Activated CD4-positive, alpha-beta T cell treated with anti-CD3 and anti-CD28 coated beads for 36 hours (primary cell): ENCODE measurements at regions of chr4 and their contacts with region 1.

Region 1: DNA sequence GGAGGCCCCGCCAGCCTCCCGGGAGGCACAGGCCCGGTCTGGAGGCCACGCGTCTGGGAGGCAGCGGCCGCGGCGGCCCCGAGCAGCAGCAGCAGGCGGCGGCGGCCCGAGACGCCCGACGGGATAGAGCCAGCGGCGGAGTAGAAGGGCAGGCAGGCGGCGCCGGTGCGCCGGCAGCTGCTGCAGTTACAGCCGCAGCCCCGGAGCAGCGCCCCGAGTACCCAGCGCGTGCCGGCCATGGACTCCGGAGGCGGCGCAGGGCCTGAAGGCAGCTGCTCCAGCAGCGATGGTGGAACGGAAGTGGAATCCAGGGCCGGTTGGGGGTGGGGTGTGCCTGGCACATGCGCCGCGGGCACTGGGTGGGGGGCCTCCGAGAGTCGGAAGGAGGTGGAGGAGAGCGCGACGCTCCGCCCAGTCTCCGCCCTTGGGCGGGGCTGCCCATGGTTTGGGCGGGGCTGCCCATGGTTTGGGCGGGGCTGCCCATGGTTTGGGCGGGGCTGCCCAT is at the start of gene GRSF1:
- DNase-seq: peak; percentile 98
- ATAC-seq: peak; percentile 87
- H3K4me3 Mint-ChIP-seq: peak within 1 kb of the TSS; percentile 94
- H3K27ac Mint-ChIP-seq: peak within 1 kb of the TSS; percentile 95
- H3K4me1 Mint-ChIP-seq: peaks cover 53% of the 10 kb centered on the region
- H3K27me3 Mint-ChIP-seq: no peaks in the 10 kb centered on the region
- total RNA-seq, gene GRSF1: 96.8 to 115 TPM

Region 2: DNA sequence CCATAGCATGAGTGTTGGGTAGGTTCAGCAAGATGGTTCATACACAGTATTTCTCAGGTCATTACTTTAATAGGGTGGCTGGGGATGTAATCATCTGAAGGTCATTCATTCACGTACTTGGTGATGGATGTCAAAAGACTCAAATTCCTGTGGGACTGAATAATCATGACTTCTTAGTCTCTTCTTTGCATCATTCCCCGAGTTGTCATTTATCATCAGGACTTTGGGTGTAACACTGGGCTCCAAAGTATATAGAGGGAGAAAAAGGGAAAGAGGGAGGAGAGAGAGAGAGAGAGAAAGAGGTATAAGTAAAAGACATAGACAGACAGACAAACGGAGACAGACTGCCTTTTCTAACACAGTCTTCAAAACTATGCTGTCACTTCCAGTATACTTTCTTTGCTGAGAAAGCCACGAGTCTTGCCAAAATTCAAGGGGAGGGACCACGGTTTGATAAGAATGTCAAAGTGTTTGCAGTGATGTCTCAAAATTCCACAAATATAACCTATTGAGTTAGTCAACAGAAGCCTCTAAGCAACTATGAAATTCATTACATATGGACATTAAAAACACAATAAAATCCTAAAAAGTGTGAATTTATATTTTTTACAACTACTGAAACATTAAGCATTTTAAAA is 1944.0 kb before region 1 on chr4:
- CTCF ChIA-PET with region 1: no interaction called
- POLR2A ChIA-PET with region 1: no interaction called
- intact Hi-C with region 1: no loop called
- DNase-seq: no peak
- ATAC-seq: no peak
- H3K4me3 Mint-ChIP-seq: no peak overlapping the region
- H3K27ac Mint-ChIP-seq: no peak overlapping the region
- H3K4me1 Mint-ChIP-seq: no peaks in the 10 kb centered on the region
- H3K27me3 Mint-ChIP-seq: no peaks in the 10 kb centered on the region

Region 3: DNA sequence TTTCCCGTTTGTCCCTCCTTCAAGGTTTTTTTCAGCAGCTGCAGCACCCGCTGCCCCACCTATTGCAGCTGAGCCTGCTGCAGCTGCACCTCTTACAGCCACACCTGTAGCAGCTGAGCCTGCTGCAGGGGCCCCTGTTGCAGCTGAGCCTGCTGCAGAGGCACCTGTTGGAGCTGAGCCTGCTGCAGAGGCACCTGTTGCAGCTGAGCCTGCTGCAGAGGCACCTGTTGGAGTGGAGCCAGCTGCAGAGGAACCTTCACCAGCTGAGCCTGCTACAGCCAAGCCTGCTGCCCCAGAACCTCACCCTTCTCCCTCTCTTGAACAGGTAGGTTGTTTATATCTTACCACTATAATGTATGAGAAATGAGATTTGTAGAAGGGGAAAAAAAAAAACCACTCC is 681.1 kb before region 1 on chr4:
- CTCF ChIA-PET with region 1: no interaction called
- POLR2A ChIA-PET with region 1: no interaction called
- intact Hi-C with region 1: no loop called
- DNase-seq: no peak
- ATAC-seq: no peak
- H3K4me3 Mint-ChIP-seq: no peak overlapping the region
- H3K27ac Mint-ChIP-seq: no peak overlapping the region
- H3K4me1 Mint-ChIP-seq: no peaks in the 10 kb centered on the region
- H3K27me3 Mint-ChIP-seq: no peaks in the 10 kb centered on the region

Region 4: GRCh38 chr4:70734168-70734954 is 105.3 kb before region 1 on chr4:
- CTCF ChIA-PET with region 1: interaction called, 3 read pairs
- POLR2A ChIA-PET with region 1: interaction called, 3 read pairs
- intact Hi-C with region 1: loop called in 1 of 2 experiments (anchors 2 kb)
- DNase-seq: peak; percentile 39
- ATAC-seq: peak; percentile 92
- H3K4me3 Mint-ChIP-seq: peak overlapping the region; percentile 52
- H3K27ac Mint-ChIP-seq: peak overlapping the region; percentile 74
- H3K4me1 Mint-ChIP-seq: peaks cover 36% of the 10 kb centered on the region
- H3K27me3 Mint-ChIP-seq: no peaks in the 10 kb centered on the region

Region 5: DNA sequence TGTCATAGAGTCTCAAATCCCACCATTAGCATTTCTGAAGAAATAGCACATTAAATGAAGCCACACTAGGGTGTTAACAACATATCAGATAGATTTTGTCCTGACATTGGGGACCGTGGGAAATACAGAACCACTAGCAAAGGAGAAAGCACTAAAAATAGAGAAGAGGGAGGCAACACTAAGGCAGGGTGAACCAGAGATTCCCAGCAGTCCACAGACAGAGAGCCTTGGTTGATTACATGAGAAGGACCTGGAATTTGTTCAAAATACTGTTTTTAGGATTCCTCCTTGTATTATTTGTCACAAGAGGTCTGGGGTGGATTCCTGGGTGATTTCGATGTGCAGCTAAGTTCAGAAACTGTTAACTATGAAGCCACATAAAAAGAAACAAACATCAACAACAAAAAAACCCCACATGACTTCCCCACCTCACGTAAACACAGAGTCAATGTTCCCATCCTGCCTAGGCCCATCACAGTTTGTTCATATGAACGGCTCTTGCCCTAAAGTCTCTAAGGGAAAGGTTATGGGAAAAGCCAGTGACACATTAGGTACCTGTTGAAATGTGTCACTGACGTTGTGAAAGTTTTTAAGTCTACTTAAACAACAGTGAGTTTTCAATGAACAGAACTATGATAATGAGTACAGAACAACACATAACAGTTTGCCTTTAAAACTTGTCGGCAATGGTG is 23.6 kb after region 1 on chr4:
- CTCF ChIA-PET with region 1: no interaction called
- POLR2A ChIA-PET with region 1: no interaction called
- intact Hi-C with region 1: loop called in 1 of 2 experiments (anchors 1 kb)
- DNase-seq: peak; percentile 40
- ATAC-seq: peak; percentile 97
- H3K4me3 Mint-ChIP-seq: no peak overlapping the region
- H3K27ac Mint-ChIP-seq: peak overlapping the region; percentile 34
- H3K4me1 Mint-ChIP-seq: peaks cover 13% of the 10 kb centered on the region
- H3K27me3 Mint-ChIP-seq: no peaks in the 10 kb centered on the region

Region 6: GRCh38 chr4:70901984-70902576 is 62.4 kb after region 1 on chr4 and contains the start of gene MOB1B:
- CTCF ChIA-PET with region 1: interaction called, 3 read pairs
- POLR2A ChIA-PET with region 1: interaction called, 3 read pairs
- intact Hi-C with region 1: loop called (anchors 1 to 2 kb)
- DNase-seq: peak; percentile 94
- ATAC-seq: peak; percentile 96
- H3K4me3 Mint-ChIP-seq: peak within 1 kb of the TSS; percentile 96
- H3K27ac Mint-ChIP-seq: peak within 1 kb of the TSS; percentile 89
- H3K4me1 Mint-ChIP-seq: peaks cover 27% of the 10 kb centered on the region
- H3K27me3 Mint-ChIP-seq: no peaks in the 10 kb centered on the region
- total RNA-seq, gene MOB1B: 18.5 to 21.9 TPM

Region 7: DNA sequence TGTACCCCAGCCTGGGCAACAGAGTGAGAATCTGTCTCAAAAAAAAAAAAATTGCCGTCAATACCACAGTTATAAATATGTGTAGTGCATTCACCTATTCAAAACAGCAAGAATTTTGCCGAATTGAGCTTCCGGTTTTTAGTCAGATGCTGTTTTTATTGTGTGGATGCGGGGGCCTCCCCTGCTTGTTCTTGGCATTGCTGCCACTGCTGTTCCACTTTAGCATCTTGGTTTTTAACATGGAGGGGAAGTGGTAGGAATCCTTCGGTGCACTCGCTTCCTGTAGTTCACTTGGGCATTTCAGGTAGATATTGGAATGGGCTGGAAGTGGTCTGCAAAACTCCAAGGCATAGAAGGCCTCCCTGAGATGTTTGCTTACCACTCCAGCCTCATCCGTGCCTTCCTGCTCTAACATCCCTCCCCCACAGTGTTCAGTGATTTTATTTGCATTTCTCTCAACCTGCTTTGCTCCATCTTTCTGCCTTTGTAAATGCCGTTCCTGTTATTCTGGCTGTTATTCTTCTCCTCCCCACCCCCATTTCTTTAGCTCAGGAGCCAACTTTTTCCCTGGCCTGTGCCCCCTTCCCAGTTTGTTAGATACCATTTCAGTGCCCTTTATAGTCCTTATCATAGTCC is 88.0 kb after region 1 on chr4:
- CTCF ChIA-PET with region 1: no interaction called
- POLR2A ChIA-PET with region 1: no interaction called
- intact Hi-C with region 1: loop called in 1 of 2 experiments (anchors 2 kb)
- DNase-seq: peak; percentile 70
- ATAC-seq: peak; percentile 75
- H3K4me3 Mint-ChIP-seq: peak overlapping the region; percentile 33
- H3K27ac Mint-ChIP-seq: peak overlapping the region; percentile 78
- H3K4me1 Mint-ChIP-seq: peaks cover 43% of the 10 kb centered on the region
- H3K27me3 Mint-ChIP-seq: no peaks in the 10 kb centered on the region

Region 8: GRCh38 chr4:70993181-70994068 is 153.8 kb after region 1 on chr4 and contains the start of gene DCK:
- CTCF ChIA-PET with region 1: no interaction called
- POLR2A ChIA-PET with region 1: no interaction called
- intact Hi-C with region 1: loop called (anchors 1 to 5 kb)
- DNase-seq: peak; percentile 91
- ATAC-seq: peak; percentile 86
- H3K4me3 Mint-ChIP-seq: peak within 1 kb of the TSS; percentile 96
- H3K27ac Mint-ChIP-seq: peak within 1 kb of the TSS; percentile 92
- H3K4me1 Mint-ChIP-seq: peaks cover 39% of the 10 kb centered on the region
- H3K27me3 Mint-ChIP-seq: no peaks in the 10 kb centered on the region
- total RNA-seq, gene DCK: 29.2 to 34.4 TPM

Region 9: DNA sequence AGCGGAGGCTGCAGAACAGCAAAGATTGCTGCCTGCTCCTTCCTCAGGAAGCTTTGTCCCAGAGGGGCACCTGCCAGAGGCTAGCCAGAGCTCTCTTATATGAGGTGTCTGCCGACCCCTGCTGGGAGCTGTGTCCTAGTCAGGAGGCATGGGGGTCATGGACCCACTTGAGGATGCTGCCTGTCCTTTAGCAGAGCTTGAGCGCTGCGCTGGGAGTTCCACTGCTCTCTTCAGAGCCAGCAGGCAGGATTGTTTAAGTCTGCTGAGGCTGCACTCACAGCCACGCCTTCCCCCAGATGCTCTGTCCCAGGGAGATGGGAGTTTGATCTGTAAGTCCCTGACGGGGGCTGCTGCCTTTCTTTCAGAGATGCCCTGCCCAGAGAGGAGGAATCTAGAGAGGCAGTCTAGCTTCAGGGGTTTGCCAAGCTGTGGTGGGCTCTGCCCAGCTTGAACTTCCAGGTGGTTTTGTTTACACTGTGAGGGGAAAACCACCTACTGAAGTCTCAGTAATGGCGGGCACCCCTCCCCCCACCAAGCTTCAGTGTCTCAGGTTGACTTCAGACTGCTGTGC is 164.7 kb after region 1 on chr4:
- CTCF ChIA-PET with region 1: no interaction called
- POLR2A ChIA-PET with region 1: interaction called, 7 read pairs
- intact Hi-C with region 1: loop called (anchors 2 to 5 kb)
- DNase-seq: peak; percentile 79
- ATAC-seq: peak; percentile 48
- H3K4me3 Mint-ChIP-seq: peak overlapping the region; percentile 21
- H3K27ac Mint-ChIP-seq: peak overlapping the region; percentile 81
- H3K4me1 Mint-ChIP-seq: peaks cover 84% of the 10 kb centered on the region
- H3K27me3 Mint-ChIP-seq: no peaks in the 10 kb centered on the region